Right lobe of liver (tissue), 6 donors: ENCODE measurements at regions of chr4 and their contacts with region 1.

Region 1: DNA sequence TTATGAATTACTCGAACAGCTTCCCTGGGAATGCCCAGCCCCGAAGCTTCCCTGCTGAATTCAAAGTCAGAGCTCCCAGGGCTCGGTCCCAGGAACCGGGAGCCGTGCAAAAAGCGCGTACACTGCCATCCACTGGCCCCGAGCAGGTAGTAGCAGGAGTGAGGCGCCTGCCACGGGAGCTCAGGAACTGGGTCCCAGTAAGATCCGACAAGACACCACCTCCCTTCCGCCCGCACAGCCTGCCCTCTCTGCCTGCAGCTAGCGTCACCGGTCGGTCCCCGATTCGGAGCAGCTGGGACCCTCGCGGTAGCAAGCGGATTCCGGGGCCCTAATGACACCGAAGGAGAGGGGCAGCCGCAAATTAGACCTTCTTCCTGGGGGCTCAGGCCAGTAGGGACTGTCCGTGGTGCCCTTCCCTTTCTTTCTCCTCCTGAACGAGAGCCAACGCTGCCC is 1.2 kb downstream of the CORIN start:
- DNase-seq: peak; percentile 87 to 90 (median 90)
- ATAC-seq: peak; percentile 96 to 99 (median 98)
- H3K4me3 ChIP-seq: peak overlapping the region; percentile 52 to 58 (median 52)
- H3K27ac ChIP-seq: no peak overlapping the region
- H3K4me1 ChIP-seq: peaks cover 0 to 16% (median 0%) of the 10 kb centered on the region in 4 donors
- H3K27me3 ChIP-seq: no peaks in the 10 kb centered on the region
- CTCF ChIP-seq: peak; percentile 69 to 79 (median 79)
- POLR2A ChIP-seq: no peak

Region 2: GRCh38 chr4:47686294-47686872 is 150.3 kb before region 1 on chr4:
- intact Hi-C with region 1: loop called in 1 of 2 experiments (anchors 10 kb)
- DNase-seq: peak; percentile 42 to 77 (median 64)
- ATAC-seq: peak; percentile 100
- H3K4me3 ChIP-seq: no peak overlapping the region
- H3K27ac ChIP-seq: peak overlapping the region in 1 of 3 donors; percentile 20
- H3K4me1 ChIP-seq: peaks cover 0 to 9% (median 2%) of the 10 kb centered on the region in 4 donors
- H3K27me3 ChIP-seq: no peaks in the 10 kb centered on the region
- CTCF ChIP-seq: peak; percentile 73 to 85 (median 82)
- POLR2A ChIP-seq: no peak

Region 3: GRCh38 chr4:47704693-47705325 is 131.9 kb before region 1 on chr4:
- intact Hi-C with region 1: loop called in 1 of 2 experiments (anchors 10 kb)
- DNase-seq: peak; percentile 49 to 86 (median 70)
- ATAC-seq: peak; percentile 87 to 92 (median 88)
- H3K4me3 ChIP-seq: peak overlapping the region in 2 of 3 donors; percentile 31 to 46
- H3K27ac ChIP-seq: peak overlapping the region; percentile 10 to 86 (median 83)
- H3K4me1 ChIP-seq: peaks cover 0 to 23% (median 4%) of the 10 kb centered on the region in 4 donors
- H3K27me3 ChIP-seq: no peaks in the 10 kb centered on the region
- CTCF ChIP-seq: peak; percentile 5 to 43 (median 31)
- POLR2A ChIP-seq: peak; percentile 53

Region 4: DNA sequence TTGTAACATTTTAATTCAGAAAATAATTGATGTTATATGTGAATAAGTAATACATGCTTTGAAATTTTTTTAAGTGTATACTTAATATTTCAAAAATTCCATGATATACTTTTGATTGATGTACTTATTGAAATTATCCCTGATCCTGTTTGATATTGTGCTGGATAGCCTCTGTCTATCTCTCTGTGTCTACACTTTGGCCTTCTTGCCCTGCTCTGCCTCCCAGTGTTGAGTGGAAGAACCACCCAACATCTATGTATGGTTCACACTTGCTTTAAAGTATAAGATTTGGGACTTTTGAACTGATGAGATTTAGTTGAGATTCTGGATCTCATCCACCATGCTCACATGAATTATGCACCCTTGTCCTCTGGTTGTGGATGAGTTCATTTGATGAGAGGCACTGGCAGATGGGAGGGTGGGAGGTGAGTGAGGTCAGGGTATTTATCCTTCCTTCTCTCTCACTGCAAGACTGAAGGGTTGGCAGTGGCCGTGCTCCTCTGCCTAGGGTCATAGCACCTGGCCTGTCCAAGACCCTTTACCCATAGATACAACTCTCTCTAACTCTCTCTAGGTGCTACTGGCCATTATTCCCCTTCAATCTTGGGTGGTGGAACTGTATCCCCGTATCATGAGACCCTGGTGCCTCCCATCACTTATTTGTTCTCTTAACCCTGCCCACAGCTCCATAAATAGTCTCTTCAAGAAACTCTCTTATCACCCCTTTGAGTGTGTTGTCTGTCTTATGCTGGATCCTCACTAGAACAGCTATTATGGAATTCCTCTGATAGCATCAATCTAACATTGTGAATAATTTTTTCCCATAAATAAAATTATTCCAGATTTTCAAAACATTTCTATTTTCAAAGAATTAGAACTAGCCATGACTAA is 74.0 kb before region 1 on chr4:
- intact Hi-C with region 1: no loop called
- DNase-seq: no peak
- ATAC-seq: peak; percentile 47 to 85 (median 66)
- H3K4me3 ChIP-seq: no peak overlapping the region
- H3K27ac ChIP-seq: no peak overlapping the region
- H3K4me1 ChIP-seq: no peaks in the 10 kb centered on the region
- H3K27me3 ChIP-seq: no peaks in the 10 kb centered on the region
- CTCF ChIP-seq: peak in 3 of 4 donors; percentile 19 to 36 (median 29)
- POLR2A ChIP-seq: no peak